Caco-2 (cell line): ENCODE measurements at regions of chr7 and their contacts with region 1.

Region 1: GRCh38 chr7:120805636-120806388 is 52.1 kb downstream of the TSPAN12 start:
- DNase-seq: peak; percentile 43 to 75
- H3K4me3 ChIP-seq: no peak overlapping the region
- H3K4me3 Mint-ChIP-seq: no peak overlapping the region
- H3K27ac Mint-ChIP-seq: no peak overlapping the region
- H3K4me1 ChIP-seq: no peaks in the 10 kb centered on the region
- H3K4me1 Mint-ChIP-seq: no peaks in the 10 kb centered on the region
- H3K27me3 ChIP-seq: no peaks in the 10 kb centered on the region
- H3K27me3 Mint-ChIP-seq: no peaks in the 10 kb centered on the region
- CTCF ChIP-seq: peak; percentile 69 to 89

Region 2: GRCh38 chr7:120774481-120774880 is 31.3 kb before region 1 on chr7:
- CTCF ChIA-PET with region 1: no interaction called
- POLR2A ChIA-PET with region 1: no interaction called
- intact Hi-C with region 1: no loop called
- DNase-seq: no peak
- H3K4me3 ChIP-seq: no peak overlapping the region
- H3K4me3 Mint-ChIP-seq: no peak overlapping the region
- H3K27ac Mint-ChIP-seq: no peak overlapping the region
- H3K4me1 ChIP-seq: no peaks in the 10 kb centered on the region
- H3K4me1 Mint-ChIP-seq: no peaks in the 10 kb centered on the region
- H3K27me3 ChIP-seq: no peaks in the 10 kb centered on the region
- H3K27me3 Mint-ChIP-seq: peaks cover 3% of the 10 kb centered on the region
- CTCF ChIP-seq: no peak

Region 3: GRCh38 chr7:120792091-120792860 is 13.5 kb before region 1 on chr7:
- CTCF ChIA-PET with region 1: no interaction called
- POLR2A ChIA-PET with region 1: no interaction called
- intact Hi-C with region 1: loop called (anchors 1 kb)
- DNase-seq: peak; percentile 77 to 79
- H3K4me3 ChIP-seq: no peak overlapping the region
- H3K4me3 Mint-ChIP-seq: no peak overlapping the region
- H3K27ac Mint-ChIP-seq: no peak overlapping the region
- H3K4me1 ChIP-seq: no peaks in the 10 kb centered on the region
- H3K4me1 Mint-ChIP-seq: no peaks in the 10 kb centered on the region
- H3K27me3 ChIP-seq: no peaks in the 10 kb centered on the region
- H3K27me3 Mint-ChIP-seq: peaks cover 4% of the 10 kb centered on the region
- CTCF ChIP-seq: peak; percentile 89 to 96

Region 4: GRCh38 chr7:120857588-120858573 is 52.1 kb after region 1 on chr7 and contains the start of gene TSPAN12:
- CTCF ChIA-PET with region 1: no interaction called
- POLR2A ChIA-PET with region 1: no interaction called
- intact Hi-C with region 1: loop called (anchors 1 kb)
- DNase-seq: peak; percentile 84 to 85
- H3K4me3 ChIP-seq: peak within 1 kb of the TSS; percentile 96
- H3K4me3 Mint-ChIP-seq: peak within 1 kb of the TSS; percentile 99
- H3K27ac Mint-ChIP-seq: peak within 1 kb of the TSS; percentile 94
- H3K4me1 ChIP-seq: peaks cover 10% of the 10 kb centered on the region
- H3K4me1 Mint-ChIP-seq: peaks cover 7% of the 10 kb centered on the region
- H3K27me3 ChIP-seq: no peaks in the 10 kb centered on the region
- H3K27me3 Mint-ChIP-seq: peaks cover 2% of the 10 kb centered on the region
- CTCF ChIP-seq: peak; percentile 53 to 59
- total RNA-seq, gene TSPAN12: 2.9 and 4.1 TPM in 2 replicates

Region 5: GRCh38 chr7:120867932-120868331 is 62.1 kb after region 1 on chr7:
- CTCF ChIA-PET with region 1: no interaction called
- POLR2A ChIA-PET with region 1: no interaction called
- intact Hi-C with region 1: no loop called
- DNase-seq: no peak
- H3K4me3 ChIP-seq: no peak overlapping the region
- H3K4me3 Mint-ChIP-seq: no peak overlapping the region
- H3K27ac Mint-ChIP-seq: no peak overlapping the region
- H3K4me1 ChIP-seq: no peaks in the 10 kb centered on the region
- H3K4me1 Mint-ChIP-seq: no peaks in the 10 kb centered on the region
- H3K27me3 ChIP-seq: no peaks in the 10 kb centered on the region
- H3K27me3 Mint-ChIP-seq: peaks cover 12% of the 10 kb centered on the region
- CTCF ChIP-seq: no peak

Region 6: GRCh38 chr7:120941064-120941463 is 135.3 kb after region 1 on chr7:
- CTCF ChIA-PET with region 1: no interaction called
- POLR2A ChIA-PET with region 1: no interaction called
- intact Hi-C with region 1: loop called (anchors 1 kb)
- DNase-seq: no peak
- H3K4me3 ChIP-seq: no peak overlapping the region
- H3K4me3 Mint-ChIP-seq: no peak overlapping the region
- H3K27ac Mint-ChIP-seq: no peak overlapping the region
- H3K4me1 ChIP-seq: no peaks in the 10 kb centered on the region
- H3K4me1 Mint-ChIP-seq: no peaks in the 10 kb centered on the region
- H3K27me3 ChIP-seq: no peaks in the 10 kb centered on the region; the same call in 1 of the 2 replicates
- H3K27me3 Mint-ChIP-seq: peaks cover under 1% of the 10 kb centered on the region
- CTCF ChIP-seq: no peak

Region 7: DNA sequence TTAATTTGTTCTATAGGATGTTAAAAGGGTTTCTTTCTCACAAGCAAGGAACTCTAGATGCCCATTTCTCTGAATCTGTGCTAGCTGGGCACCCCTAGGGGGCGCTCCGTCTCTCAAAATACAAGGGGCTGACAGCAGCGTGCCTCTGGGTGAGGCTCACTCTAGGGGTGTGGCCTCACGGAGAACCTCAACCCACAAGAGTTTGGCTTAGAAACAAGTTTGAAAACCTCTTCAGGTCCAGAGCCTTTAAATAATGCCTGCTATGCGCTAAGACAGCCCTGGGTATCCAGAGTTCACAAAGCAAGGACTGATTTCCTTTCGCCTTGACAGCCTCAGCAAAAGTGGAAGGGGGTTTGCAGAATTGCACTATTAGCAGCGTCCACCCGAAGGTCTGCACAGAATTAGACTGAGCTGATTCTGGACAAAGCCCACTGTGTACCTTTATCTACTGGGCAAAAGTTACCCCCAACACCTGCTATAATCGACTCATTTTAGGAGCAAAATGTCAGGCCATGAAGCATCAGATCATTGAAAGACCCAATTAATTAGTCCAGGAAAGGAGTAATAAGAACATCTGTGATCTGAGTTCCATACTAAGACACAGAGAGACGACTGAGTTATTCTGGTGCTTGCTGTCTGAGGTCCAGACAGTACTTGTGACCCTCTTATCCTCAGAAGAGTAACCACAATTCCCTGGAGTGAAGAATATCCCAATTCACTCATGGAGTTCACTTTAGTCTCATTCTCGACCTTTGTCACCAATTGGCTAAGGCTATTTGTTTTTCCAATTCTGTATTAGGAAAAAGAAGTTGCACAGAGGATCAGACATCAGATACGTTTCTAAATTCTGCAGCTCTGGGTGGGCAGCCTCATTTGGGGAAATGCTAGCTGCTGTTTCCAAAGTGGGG is 182.1 kb after region 1 on chr7:
- CTCF ChIA-PET with region 1: no interaction called
- POLR2A ChIA-PET with region 1: no interaction called
- intact Hi-C with region 1: loop called (anchors 5 kb)
- DNase-seq: peak; percentile 80 to 85
- H3K4me3 ChIP-seq: peak overlapping the region; percentile 20
- H3K4me3 Mint-ChIP-seq: peak overlapping the region; percentile 90
- H3K27ac Mint-ChIP-seq: no peak overlapping the region
- H3K4me1 ChIP-seq: peaks cover 10% of the 10 kb centered on the region
- H3K4me1 Mint-ChIP-seq: peaks cover 16% of the 10 kb centered on the region
- H3K27me3 ChIP-seq: 0 out of 2 replicates have a peak, but pooled peaks cover 2% of the 10 kb centered on the region
- H3K27me3 Mint-ChIP-seq: peaks cover 6% of the 10 kb centered on the region
- CTCF ChIP-seq: peak; percentile 97

Region 8: DNA sequence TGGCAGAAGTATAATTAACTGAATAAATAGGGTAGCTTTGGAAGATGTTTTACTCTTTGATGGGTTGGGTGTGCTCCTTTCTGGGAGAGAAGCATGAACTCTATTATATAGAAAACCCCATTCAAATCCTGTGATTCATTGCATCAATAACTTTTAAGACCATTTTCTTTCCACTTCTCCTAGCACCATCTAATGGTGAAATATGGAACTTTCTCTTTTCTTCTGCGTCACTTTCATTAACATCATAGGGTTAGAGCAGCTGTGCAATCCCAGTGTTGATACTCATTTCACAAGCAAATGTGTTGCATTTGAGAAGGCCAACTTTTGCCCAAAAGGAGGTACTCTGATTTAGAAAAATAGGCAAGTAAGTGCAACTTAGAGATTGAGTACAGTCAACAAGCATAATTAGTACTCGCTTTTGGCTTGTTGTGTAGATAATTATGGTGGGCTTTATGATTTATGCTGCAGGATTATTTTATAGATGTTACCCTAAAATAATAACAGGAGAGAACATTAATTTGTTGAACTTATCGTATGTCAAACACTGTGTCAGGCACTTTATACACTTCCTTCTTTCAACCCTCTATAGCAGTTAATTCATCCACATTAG is 275.6 kb after region 1 on chr7:
- CTCF ChIA-PET with region 1: no interaction called
- POLR2A ChIA-PET with region 1: no interaction called
- intact Hi-C with region 1: loop called (anchors 1 kb)
- DNase-seq: peak in 1 of 2 experiments; percentile 52
- H3K4me3 ChIP-seq: no peak overlapping the region
- H3K4me3 Mint-ChIP-seq: no peak overlapping the region
- H3K27ac Mint-ChIP-seq: no peak overlapping the region
- H3K4me1 ChIP-seq: peaks cover 5% of the 10 kb centered on the region; the same call in 1 of the 2 replicates
- H3K4me1 Mint-ChIP-seq: peaks cover 7% of the 10 kb centered on the region
- H3K27me3 ChIP-seq: no peaks in the 10 kb centered on the region
- H3K27me3 Mint-ChIP-seq: no peaks in the 10 kb centered on the region
- CTCF ChIP-seq: peak; percentile 62 to 64

Region 9: DNA sequence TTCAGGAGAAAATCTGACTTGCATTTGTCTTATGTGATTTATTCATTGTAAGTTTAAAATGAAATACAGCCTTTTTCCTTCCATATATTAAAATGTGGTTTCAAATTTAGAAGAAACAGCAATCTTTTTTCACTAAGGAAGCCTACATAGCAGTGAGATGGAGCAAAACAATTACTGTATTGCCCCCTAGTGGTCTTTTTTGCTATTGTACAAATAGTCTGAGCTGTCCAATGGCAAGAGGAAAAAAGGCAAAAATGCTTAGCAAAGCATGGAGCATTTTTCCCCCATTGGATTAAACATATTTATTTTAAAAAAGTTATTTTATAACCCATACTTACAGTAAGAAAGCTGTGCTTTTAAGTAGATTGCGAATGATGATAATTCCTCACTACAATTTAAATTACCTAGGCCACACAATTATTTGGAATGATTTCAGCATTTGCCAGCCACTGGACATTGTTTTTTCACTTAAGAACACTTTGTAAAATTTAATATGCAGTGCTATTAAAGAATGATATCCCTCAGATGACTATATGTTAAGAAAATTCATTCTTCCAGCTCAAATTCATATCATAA is 302.2 kb after region 1 on chr7:
- CTCF ChIA-PET with region 1: interaction called, 3 read pairs
- POLR2A ChIA-PET with region 1: no interaction called
- intact Hi-C with region 1: loop called (anchors 1 kb)
- DNase-seq: peak in 1 of 2 experiments; percentile 66
- H3K4me3 ChIP-seq: no peak overlapping the region
- H3K4me3 Mint-ChIP-seq: no peak overlapping the region
- H3K27ac Mint-ChIP-seq: no peak overlapping the region
- H3K4me1 ChIP-seq: peaks cover 7% of the 10 kb centered on the region; the same call in 1 of the 2 replicates
- H3K4me1 Mint-ChIP-seq: peaks cover 7% of the 10 kb centered on the region
- H3K27me3 ChIP-seq: no peaks in the 10 kb centered on the region
- H3K27me3 Mint-ChIP-seq: peaks cover 10% of the 10 kb centered on the region
- CTCF ChIP-seq: peak; percentile 69 to 76